Body of pancreas (tissue), 4 donors: ENCODE measurements at regions of chr7 and their contacts with region 1.

Region 1: GRCh38 chr7:49721441-49721840 is 52.0 kb upstream of the VWC2 start:
- DNase-seq: no peak
- ATAC-seq: no peak
- H3K4me3 ChIP-seq: no peak overlapping the region
- H3K27ac ChIP-seq: no peak overlapping the region
- H3K4me1 ChIP-seq: no peaks in the 10 kb centered on the region
- H3K27me3 ChIP-seq: no peaks in the 10 kb centered on the region
- CTCF ChIP-seq: no peak
- POLR2A ChIP-seq: no peak

Region 2: DNA sequence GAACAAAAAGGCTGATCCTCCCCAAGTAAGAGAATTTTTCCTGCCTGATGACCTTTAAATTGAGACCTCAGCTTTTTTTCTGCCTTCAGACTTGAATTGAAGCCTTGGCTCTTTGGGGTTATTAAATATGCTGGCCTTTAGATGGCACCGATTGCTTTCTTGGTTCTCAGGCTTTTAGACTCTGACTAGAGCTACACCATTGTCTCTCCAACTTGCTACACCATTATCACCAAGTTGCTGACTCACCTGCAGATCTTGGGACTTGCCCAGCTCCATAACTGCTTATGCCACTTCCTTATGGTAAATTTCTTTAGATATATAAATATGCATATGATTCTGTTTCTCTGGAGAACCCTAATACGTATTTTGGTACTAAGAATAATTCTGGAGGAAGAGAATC is 1553.3 kb before region 1 on chr7:
- intact Hi-C with region 1: no loop called
- DNase-seq: no peak
- ATAC-seq: no peak
- H3K4me3 ChIP-seq: no peak overlapping the region
- H3K27ac ChIP-seq: no peak overlapping the region
- H3K4me1 ChIP-seq: no peaks in the 10 kb centered on the region
- H3K27me3 ChIP-seq: no peaks in the 10 kb centered on the region
- CTCF ChIP-seq: no peak
- POLR2A ChIP-seq: no peak

Region 3: DNA sequence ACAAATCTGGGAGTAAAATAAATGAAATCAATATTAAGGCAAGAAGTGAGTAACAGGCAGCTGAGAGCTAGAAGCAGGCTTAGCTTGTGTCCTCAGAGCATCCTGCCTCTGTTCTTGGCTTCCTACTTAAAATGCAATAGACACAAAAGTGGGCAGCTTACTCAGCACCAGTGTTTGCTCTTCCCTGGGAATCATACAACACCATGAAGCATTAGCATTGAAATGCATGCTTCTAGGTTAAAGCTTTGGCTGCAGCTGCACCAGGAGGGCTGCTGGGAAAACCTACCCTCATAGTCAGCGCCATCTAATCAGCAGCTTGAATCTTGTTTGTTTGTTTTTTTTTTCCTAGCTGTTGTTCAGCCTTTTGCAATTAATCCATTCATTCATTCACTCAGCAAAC is 52.2 kb before region 1 on chr7:
- intact Hi-C with region 1: loop called (anchors 10 kb)
- DNase-seq: no peak
- ATAC-seq: no peak
- H3K4me3 ChIP-seq: no peak overlapping the region
- H3K27ac ChIP-seq: no peak overlapping the region
- H3K4me1 ChIP-seq: no peaks in the 10 kb centered on the region
- H3K27me3 ChIP-seq: no peaks in the 10 kb centered on the region
- CTCF ChIP-seq: no peak
- POLR2A ChIP-seq: no peak

Region 4: GRCh38 chr7:49894543-49894942 is 173.1 kb after region 1 on chr7:
- intact Hi-C with region 1: no loop called
- DNase-seq: no peak
- ATAC-seq: no peak
- H3K4me3 ChIP-seq: no peak overlapping the region
- H3K27ac ChIP-seq: no peak overlapping the region
- H3K4me1 ChIP-seq: no peaks in the 10 kb centered on the region
- H3K27me3 ChIP-seq: no peaks in the 10 kb centered on the region
- CTCF ChIP-seq: no peak
- POLR2A ChIP-seq: no peak

Region 5: GRCh38 chr7:50062951-50063350 is 341.5 kb after region 1 on chr7:
- intact Hi-C with region 1: no loop called
- DNase-seq: no peak
- ATAC-seq: no peak
- H3K4me3 ChIP-seq: no peak overlapping the region
- H3K27ac ChIP-seq: no peak overlapping the region
- H3K4me1 ChIP-seq: peaks cover 3% of the 10 kb centered on the region
- H3K27me3 ChIP-seq: no peaks in the 10 kb centered on the region
- CTCF ChIP-seq: no peak
- POLR2A ChIP-seq: no peak

Region 6: DNA sequence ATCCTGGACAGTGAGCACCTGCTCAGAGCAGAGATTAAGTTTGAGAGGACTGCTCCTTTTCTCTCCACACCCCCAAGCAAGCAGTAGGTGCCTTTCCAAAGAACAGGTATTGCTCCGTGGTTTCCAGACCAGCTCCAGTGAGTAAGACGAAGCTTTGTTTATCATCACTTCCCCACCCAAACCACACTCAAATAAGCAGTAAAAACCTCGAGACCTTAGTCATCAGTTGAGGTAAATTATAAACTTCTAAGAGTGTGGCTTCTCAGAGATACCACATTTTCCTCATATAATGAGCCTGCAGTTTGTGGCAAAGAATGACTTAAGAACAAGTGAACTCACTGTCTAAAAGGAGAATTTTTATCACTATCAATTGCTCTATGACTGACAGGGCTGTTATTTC is 1111.3 kb after region 1 on chr7:
- intact Hi-C with region 1: no loop called
- DNase-seq: no peak
- ATAC-seq: no peak
- H3K4me3 ChIP-seq: no peak overlapping the region
- H3K27ac ChIP-seq: no peak overlapping the region
- H3K4me1 ChIP-seq: no peaks in the 10 kb centered on the region
- H3K27me3 ChIP-seq: no peaks in the 10 kb centered on the region
- CTCF ChIP-seq: no peak
- POLR2A ChIP-seq: no peak